CD4-positive, alpha-beta T cell (primary cell): ENCODE measurements at regions of chr1 and their contacts with region 1.

Region 1: GRCh38 chr1:212368073-212368484 is 46.6 kb downstream of the PACC1 start:
- DNase-seq: peak in 13 of 14 experiments; percentile 17 to 81 (median 25)
- ATAC-seq: peak; percentile 95
- H3K4me3 ChIP-seq: no peak overlapping the region
- H3K4me3 Mint-ChIP-seq: no peak overlapping the region
- H3K27ac ChIP-seq: no peak overlapping the region
- H3K27ac Mint-ChIP-seq: no peak overlapping the region
- H3K4me1 ChIP-seq: no peaks in the 10 kb centered on the region
- H3K4me1 Mint-ChIP-seq: peaks cover 5% of the 10 kb centered on the region
- H3K27me3 ChIP-seq: no peaks in the 10 kb centered on the region
- H3K27me3 Mint-ChIP-seq: no peaks in the 10 kb centered on the region
- CTCF ChIP-seq: peak; percentile 69

Region 2: DNA sequence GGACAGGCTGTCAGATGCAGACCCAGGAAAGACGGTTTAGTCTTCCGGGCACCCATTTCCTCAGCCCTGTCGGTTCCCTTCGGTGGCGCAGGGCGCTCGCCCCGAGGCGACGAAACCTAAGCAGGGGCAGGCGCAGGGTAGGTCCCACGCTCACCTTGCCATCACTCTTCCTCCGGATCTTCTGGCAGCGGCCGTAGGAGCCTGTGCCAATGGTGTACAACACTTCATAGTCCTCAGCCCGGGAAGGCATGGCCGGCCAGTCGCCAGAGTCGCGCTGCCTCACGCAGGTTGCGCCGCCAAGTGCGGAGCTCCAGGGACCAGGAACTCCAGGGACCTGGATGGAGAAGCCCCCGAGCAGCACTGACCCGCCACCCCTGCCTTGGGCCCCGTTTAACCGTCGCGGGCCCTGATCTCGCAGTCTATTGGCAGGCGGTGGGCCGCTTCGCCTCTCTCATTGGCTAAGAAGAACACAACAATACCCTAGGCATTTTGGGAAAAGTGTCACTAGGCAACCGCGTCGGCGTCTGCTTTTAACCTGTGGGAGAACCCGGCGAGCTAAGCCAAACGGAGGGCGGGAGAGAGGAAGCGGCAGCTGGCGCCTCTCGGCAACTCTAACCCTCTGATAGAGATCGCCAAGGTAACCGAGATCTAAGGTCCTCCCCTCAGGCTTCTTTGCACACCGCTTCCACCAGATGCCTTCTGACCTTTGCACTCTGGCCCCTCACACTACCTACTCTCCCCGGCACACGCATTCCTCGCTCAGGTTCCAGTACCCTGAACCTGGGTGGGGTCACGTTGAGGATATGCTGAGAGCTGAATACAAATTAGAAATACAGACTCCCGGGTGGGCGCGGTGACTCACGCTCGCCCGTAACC is 692.6 kb before region 1 on chr1 and contains the start of gene NEK2:
- CTCF ChIA-PET with region 1: interaction called, 5 read pairs
- POLR2A ChIA-PET with region 1: no interaction called
- intact Hi-C with region 1: loop called (anchors 1 to 5 kb)
- DNase-seq: peak; percentile 70 to 93 (median 79)
- ATAC-seq: peak; percentile 94
- H3K4me3 ChIP-seq: peak within 1 kb of the TSS; percentile 67
- H3K4me3 Mint-ChIP-seq: peak within 1 kb of the TSS; percentile 92
- H3K27ac ChIP-seq: no peak within 1 kb of the TSS
- H3K27ac Mint-ChIP-seq: peak within 1 kb of the TSS; percentile 73
- H3K4me1 ChIP-seq: peaks cover 15% of the 10 kb centered on the region
- H3K4me1 Mint-ChIP-seq: peaks cover 7% of the 10 kb centered on the region
- H3K27me3 ChIP-seq: no peaks in the 10 kb centered on the region
- H3K27me3 Mint-ChIP-seq: no peaks in the 10 kb centered on the region
- CTCF ChIP-seq: no peak
- total RNA-seq, gene NEK2: not detected

Region 3: DNA sequence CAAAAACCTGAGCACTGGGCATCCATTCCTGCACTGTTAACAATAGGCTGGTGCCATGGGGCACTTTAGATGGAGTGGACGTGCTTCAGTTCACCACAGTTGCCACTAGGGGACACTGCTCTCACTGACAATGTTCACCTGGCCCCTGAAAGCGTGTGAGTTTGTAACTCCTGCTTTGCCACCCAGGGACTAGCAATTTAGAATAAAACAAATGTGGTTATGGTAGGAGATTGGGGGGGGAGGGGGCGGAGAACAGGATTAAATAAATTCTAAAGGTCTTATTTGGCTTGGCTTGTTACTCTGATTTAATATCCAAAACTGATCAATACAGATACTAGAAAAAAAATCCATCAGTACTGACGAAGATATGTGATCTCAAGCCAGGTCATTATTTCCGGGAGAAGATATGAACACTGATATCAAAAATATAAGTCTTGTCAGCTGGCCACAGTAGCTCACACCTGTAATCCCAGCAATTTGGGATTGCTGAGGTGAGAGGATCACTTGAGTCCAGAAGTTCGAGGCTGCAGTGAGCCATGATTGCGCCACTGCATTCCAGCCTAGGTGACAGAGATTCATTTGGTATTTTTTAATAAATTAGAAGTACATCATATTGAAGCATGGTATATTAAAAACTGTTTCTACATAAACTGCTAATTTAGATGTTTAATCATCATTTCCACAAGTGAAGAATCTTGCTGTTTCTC is 355.9 kb before region 1 on chr1:
- CTCF ChIA-PET with region 1: no interaction called
- POLR2A ChIA-PET with region 1: no interaction called
- intact Hi-C with region 1: loop called in 1 of 2 experiments (anchors 1 kb)
- DNase-seq: peak; percentile 39 to 80 (median 51)
- ATAC-seq: peak; percentile 100
- H3K4me3 ChIP-seq: no peak overlapping the region
- H3K4me3 Mint-ChIP-seq: no peak overlapping the region
- H3K27ac ChIP-seq: no peak overlapping the region
- H3K27ac Mint-ChIP-seq: no peak overlapping the region
- H3K4me1 ChIP-seq: no peaks in the 10 kb centered on the region
- H3K4me1 Mint-ChIP-seq: no peaks in the 10 kb centered on the region
- H3K27me3 ChIP-seq: no peaks in the 10 kb centered on the region
- H3K27me3 Mint-ChIP-seq: no peaks in the 10 kb centered on the region
- CTCF ChIP-seq: peak; percentile 89

Region 4: GRCh38 chr1:212062832-212063438 is 305.1 kb before region 1 on chr1:
- CTCF ChIA-PET with region 1: no interaction called
- POLR2A ChIA-PET with region 1: no interaction called
- intact Hi-C with region 1: loop called in 1 of 2 experiments (anchors 2 kb)
- DNase-seq: peak in 3 of 14 experiments; percentile 47 to 57 (median 55)
- ATAC-seq: peak; percentile 69
- H3K4me3 ChIP-seq: no peak overlapping the region
- H3K4me3 Mint-ChIP-seq: no peak overlapping the region
- H3K27ac ChIP-seq: no peak overlapping the region
- H3K27ac Mint-ChIP-seq: no peak overlapping the region
- H3K4me1 ChIP-seq: no peaks in the 10 kb centered on the region
- H3K4me1 Mint-ChIP-seq: no peaks in the 10 kb centered on the region
- H3K27me3 ChIP-seq: no peaks in the 10 kb centered on the region
- H3K27me3 Mint-ChIP-seq: no peaks in the 10 kb centered on the region
- CTCF ChIP-seq: peak; percentile 80

Region 5: GRCh38 chr1:212070720-212071302 is 297.3 kb before region 1 on chr1:
- CTCF ChIA-PET with region 1: interaction called, 28 read pairs
- POLR2A ChIA-PET with region 1: interaction called, 9 read pairs
- intact Hi-C with region 1: loop called (anchors 1 to 2 kb)
- DNase-seq: peak in 3 of 14 experiments; percentile 68 to 71 (median 70)
- ATAC-seq: peak; percentile 62
- H3K4me3 ChIP-seq: no peak overlapping the region
- H3K4me3 Mint-ChIP-seq: no peak overlapping the region
- H3K27ac ChIP-seq: no peak overlapping the region
- H3K27ac Mint-ChIP-seq: no peak overlapping the region
- H3K4me1 ChIP-seq: no peaks in the 10 kb centered on the region
- H3K4me1 Mint-ChIP-seq: no peaks in the 10 kb centered on the region
- H3K27me3 ChIP-seq: no peaks in the 10 kb centered on the region
- H3K27me3 Mint-ChIP-seq: no peaks in the 10 kb centered on the region
- CTCF ChIP-seq: peak; percentile 76

Region 6: GRCh38 chr1:212147581-212148033 is 220.5 kb before region 1 on chr1:
- CTCF ChIA-PET with region 1: no interaction called
- POLR2A ChIA-PET with region 1: no interaction called
- intact Hi-C with region 1: no loop called
- DNase-seq: no peak
- ATAC-seq: no peak
- H3K4me3 ChIP-seq: no peak overlapping the region
- H3K4me3 Mint-ChIP-seq: no peak overlapping the region
- H3K27ac ChIP-seq: no peak overlapping the region
- H3K27ac Mint-ChIP-seq: no peak overlapping the region
- H3K4me1 ChIP-seq: no peaks in the 10 kb centered on the region
- H3K4me1 Mint-ChIP-seq: no peaks in the 10 kb centered on the region
- H3K27me3 ChIP-seq: no peaks in the 10 kb centered on the region
- H3K27me3 Mint-ChIP-seq: no peaks in the 10 kb centered on the region
- CTCF ChIP-seq: no peak

Region 7: DNA sequence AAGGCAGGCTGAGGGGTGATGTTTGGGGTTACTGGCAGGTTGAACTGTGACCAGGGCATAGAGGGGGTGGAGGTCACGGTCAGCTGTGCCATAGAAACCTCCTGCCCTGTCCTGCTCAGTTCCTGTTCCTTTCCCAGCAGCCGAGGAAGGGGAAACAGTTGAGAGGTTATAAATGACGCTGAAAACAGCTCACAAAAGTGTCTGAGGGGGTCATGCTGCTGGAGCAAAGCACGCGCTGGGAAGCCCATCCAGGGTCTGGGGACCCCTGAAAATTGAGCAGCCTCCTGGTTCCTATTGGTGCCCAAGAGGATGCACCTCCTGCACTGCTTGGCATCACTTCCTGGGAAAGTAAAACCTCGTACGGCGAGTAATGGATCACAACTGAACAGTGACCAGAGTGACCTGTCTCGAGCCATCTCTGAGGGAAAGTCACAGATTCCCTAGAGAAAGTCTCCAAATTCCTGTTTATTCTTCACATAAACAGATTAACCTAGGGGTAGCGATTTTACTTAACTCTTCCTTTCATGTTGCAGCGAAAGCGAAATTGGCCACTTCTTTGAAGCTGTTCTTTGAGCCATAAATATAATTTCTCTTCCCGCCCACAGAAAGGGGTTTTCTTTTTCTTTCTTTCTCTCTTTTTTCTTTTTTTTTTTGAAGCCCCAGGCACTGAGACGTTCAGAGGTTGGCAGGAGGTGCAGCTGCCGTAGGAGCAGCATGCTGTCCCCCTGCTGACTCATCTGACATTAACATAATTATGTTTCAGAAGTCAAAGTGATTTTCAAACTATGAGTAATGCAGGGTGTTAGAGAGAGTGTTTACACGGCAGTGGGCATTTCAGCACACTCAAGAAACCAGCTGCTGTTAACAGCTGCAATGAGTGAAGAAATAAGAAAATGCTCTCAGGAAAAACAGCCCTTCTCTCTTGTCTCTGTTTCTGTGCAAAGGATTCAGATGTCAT is 198.7 kb after region 1 on chr1:
- CTCF ChIA-PET with region 1: no interaction called
- POLR2A ChIA-PET with region 1: no interaction called
- intact Hi-C with region 1: no loop called
- DNase-seq: peak in 13 of 14 experiments; percentile 11 to 80 (median 46)
- ATAC-seq: peak; percentile 99
- H3K4me3 ChIP-seq: peak overlapping the region; percentile 66
- H3K4me3 Mint-ChIP-seq: peak overlapping the region; percentile 99
- H3K27ac ChIP-seq: no peak overlapping the region
- H3K27ac Mint-ChIP-seq: peak overlapping the region; percentile 62
- H3K4me1 ChIP-seq: peaks cover 6% of the 10 kb centered on the region
- H3K4me1 Mint-ChIP-seq: peaks cover 16% of the 10 kb centered on the region
- H3K27me3 ChIP-seq: no peaks in the 10 kb centered on the region
- H3K27me3 Mint-ChIP-seq: peaks cover under 1% of the 10 kb centered on the region
- CTCF ChIP-seq: no peak